Activated CD4-positive, alpha-beta memory T cell treated with anti-CD3 and anti-CD28 coated beads, Interleukin-2, amount 10 ng/mL, durations not matched to agents 7 days and 5 days (primary cell): ENCODE measurements at regions of chr11 and their contacts with region 1.

Region 1: GRCh38 chr11:14454861-14455632 is 44.6 kb downstream of the COPB1 start:
- DNase-seq: no peak
- H3K4me3 Mint-ChIP-seq: no peak overlapping the region
- H3K27ac Mint-ChIP-seq: no peak overlapping the region
- H3K4me1 Mint-ChIP-seq: peaks cover 3% of the 10 kb centered on the region
- H3K27me3 Mint-ChIP-seq: no peaks in the 10 kb centered on the region

Region 2: DNA sequence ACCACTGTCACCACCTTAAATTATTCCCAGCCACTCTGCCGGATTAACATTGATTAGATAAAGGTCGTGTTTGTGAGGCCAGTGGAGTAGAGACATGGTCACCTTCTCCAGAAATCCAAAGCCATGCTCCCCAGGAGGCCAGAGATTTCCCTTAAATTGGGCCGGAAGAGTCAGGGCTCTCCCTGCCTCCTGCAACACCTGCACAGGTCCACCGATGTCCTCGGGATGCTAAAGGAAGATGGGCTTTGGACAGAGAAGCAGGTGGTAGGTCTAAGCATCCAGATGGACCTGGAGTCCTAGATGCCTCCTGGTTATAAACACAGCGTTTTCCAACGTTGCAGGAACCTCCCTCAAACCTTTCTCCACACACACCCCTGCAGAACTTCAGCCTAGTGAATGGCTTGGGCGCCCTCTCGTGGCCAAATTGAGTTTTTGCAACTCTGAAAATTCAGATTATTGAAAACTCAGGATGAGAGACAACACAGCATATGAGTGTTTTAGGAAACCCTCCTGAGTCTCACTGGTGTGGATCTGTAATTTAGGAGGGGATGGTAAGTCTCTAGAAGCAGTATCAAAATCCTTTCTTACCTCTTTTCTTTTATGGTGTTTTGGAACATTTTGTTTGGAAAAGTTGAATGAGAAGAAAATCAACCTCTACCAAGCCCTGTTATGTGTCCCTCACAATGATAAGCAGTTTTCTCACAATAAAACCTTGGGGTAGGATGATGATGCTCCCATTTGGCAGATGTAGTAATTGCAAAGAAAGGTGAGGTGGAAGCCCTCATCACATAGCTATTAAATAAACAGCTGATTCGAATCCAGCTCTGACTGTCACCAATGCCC is 205.7 kb before region 1 on chr11:
- CTCF ChIA-PET with region 1: interaction called, 18 read pairs
- POLR2A ChIA-PET with region 1: no interaction called
- DNase-seq: peak; percentile 77
- H3K4me3 Mint-ChIP-seq: peak overlapping the region; percentile 5
- H3K27ac Mint-ChIP-seq: no peak overlapping the region
- H3K4me1 Mint-ChIP-seq: peaks cover 23% of the 10 kb centered on the region
- H3K27me3 Mint-ChIP-seq: peaks cover 11% of the 10 kb centered on the region

Region 3: GRCh38 chr11:14300661-14301304 is 154.3 kb before region 1 on chr11:
- CTCF ChIA-PET with region 1: interaction called, 146 read pairs
- POLR2A ChIA-PET with region 1: interaction called, 10 read pairs
- DNase-seq: peak; percentile 64
- H3K4me3 Mint-ChIP-seq: no peak overlapping the region
- H3K27ac Mint-ChIP-seq: no peak overlapping the region
- H3K4me1 Mint-ChIP-seq: peaks cover 18% of the 10 kb centered on the region
- H3K27me3 Mint-ChIP-seq: no peaks in the 10 kb centered on the region

Region 4: GRCh38 chr11:14414470-14415461 is 40.3 kb before region 1 on chr11:
- CTCF ChIA-PET with region 1: interaction called, 17 read pairs
- POLR2A ChIA-PET with region 1: interaction called, 3 read pairs
- DNase-seq: peak; percentile 88
- H3K4me3 Mint-ChIP-seq: peak overlapping the region; percentile 19
- H3K27ac Mint-ChIP-seq: peak overlapping the region; percentile 82
- H3K4me1 Mint-ChIP-seq: peaks cover 72% of the 10 kb centered on the region
- H3K27me3 Mint-ChIP-seq: no peaks in the 10 kb centered on the region

Region 5: DNA sequence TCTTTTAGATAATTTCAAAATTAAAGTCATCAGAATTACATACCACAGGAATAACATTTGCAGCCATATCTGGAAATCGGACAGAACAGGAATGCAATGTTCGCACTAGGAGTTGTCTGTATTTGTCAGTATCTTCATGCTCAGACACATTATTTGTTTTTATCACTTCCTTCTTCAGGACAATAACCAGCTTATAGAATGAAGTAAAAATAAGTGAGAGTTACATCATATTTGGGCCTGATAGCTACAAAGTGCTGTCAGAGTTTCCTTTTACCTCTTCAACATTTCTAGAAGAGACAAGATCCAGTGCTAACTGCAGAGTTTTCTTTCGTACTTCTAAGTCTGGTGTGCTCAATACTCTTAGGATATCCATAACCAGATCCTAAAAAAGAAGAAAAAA is 25.7 kb after region 1 on chr11:
- CTCF ChIA-PET with region 1: interaction called, 21 read pairs
- POLR2A ChIA-PET with region 1: interaction called, 5 read pairs
- DNase-seq: no peak
- H3K4me3 Mint-ChIP-seq: no peak overlapping the region
- H3K27ac Mint-ChIP-seq: peak overlapping the region; percentile 26
- H3K4me1 Mint-ChIP-seq: peaks cover 12% of the 10 kb centered on the region
- H3K27me3 Mint-ChIP-seq: no peaks in the 10 kb centered on the region

Region 6: DNA sequence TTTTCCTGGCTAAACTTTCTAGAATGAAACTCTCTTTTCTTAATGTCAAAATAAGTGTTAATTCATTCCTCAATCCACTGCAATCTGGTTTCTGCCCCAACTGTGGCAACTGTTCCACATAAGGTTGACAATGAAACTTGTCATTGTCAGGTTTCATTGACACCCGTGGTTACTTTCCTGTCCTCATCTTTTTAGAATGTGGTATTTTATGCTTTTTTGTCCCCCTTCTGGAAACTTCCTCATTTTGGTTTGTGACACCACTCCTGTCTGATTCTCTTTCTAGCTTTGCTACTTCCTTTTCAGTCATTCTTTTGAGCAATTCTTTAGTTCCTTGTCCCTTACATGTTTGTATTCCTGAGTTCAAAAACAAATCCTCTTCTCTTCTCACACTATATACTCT is 181.1 kb after region 1 on chr11:
- CTCF ChIA-PET with region 1: no interaction called
- POLR2A ChIA-PET with region 1: no interaction called
- DNase-seq: no peak
- H3K4me3 Mint-ChIP-seq: no peak overlapping the region
- H3K27ac Mint-ChIP-seq: peak overlapping the region; percentile 42
- H3K4me1 Mint-ChIP-seq: peaks cover 58% of the 10 kb centered on the region
- H3K27me3 Mint-ChIP-seq: no peaks in the 10 kb centered on the region

Region 7: GRCh38 chr11:14842002-14842401 is 387.0 kb after region 1 on chr11:
- CTCF ChIA-PET with region 1: no interaction called
- POLR2A ChIA-PET with region 1: no interaction called
- DNase-seq: no peak
- H3K4me3 Mint-ChIP-seq: no peak overlapping the region
- H3K27ac Mint-ChIP-seq: no peak overlapping the region
- H3K4me1 Mint-ChIP-seq: no peaks in the 10 kb centered on the region
- H3K27me3 Mint-ChIP-seq: no peaks in the 10 kb centered on the region